ENCODE measurements at regions of chr12 and their contacts with region 1.

Region 1: GRCh38 chr12:98903875-98904274 is 258.8 kb downstream of the APAF1 start:
- DNase-seq: no peak
- H3K4me3 ChIP-seq: no peak overlapping the region
- H3K27ac ChIP-seq: no peak overlapping the region
- H3K4me1 ChIP-seq: no peaks in the 10 kb centered on the region
- H3K27me3 ChIP-seq: no peaks in the 10 kb centered on the region
- CTCF ChIP-seq: no peak
- EP300 ChIP-seq: no peak
- POLR2A ChIP-seq: no peak

Region 2: GRCh38 chr12:98955277-98955676 is 51.4 kb after region 1 on chr12:
- intact Hi-C with region 1: loop called (anchors 2 kb)
- DNase-seq: no peak
- H3K4me3 ChIP-seq: no peak overlapping the region
- H3K27ac ChIP-seq: no peak overlapping the region
- H3K4me1 ChIP-seq: no peaks in the 10 kb centered on the region
- H3K27me3 ChIP-seq: no peaks in the 10 kb centered on the region
- CTCF ChIP-seq: no peak
- EP300 ChIP-seq: no peak
- POLR2A ChIP-seq: no peak

Measured in sigmoid colon (tissue), 7 donors.